ENCODE measurements at regions of chr11 and their contacts with region 1.

Region 1: DNA sequence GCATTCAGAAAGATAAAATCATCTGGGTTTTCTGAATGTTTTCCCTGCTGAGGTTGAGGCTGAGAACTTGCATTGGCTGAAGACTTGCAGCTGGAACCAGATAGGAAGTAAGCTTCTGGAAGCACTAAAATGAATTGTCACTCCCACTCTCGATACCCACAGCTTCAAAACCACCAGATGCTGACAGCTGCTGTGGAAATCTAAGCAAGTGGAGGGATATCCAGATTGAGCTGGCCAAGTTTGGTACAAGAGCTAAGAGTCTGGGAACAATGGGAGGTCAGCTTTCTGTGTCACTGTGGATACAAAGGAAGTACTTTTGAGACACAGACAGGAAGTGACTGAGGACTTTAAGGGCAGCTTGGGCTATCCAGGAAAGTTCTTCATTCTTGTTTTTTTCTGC is 51.3 kb upstream of the CD44 start:
- DNase-seq: peak; percentile 87
- H3K4me3 ChIP-seq: no peak overlapping the region
- H3K27ac ChIP-seq: peak overlapping the region in 3 of 4 donors; percentile 2 to 55 (median 27)
- H3K4me1 ChIP-seq: peaks cover 37 to 67% (median 55%) of the 10 kb centered on the region in 4 donors
- H3K27me3 ChIP-seq: no peaks in the 10 kb centered on the region
- CTCF ChIP-seq: no peak
- EP300 ChIP-seq: no peak
- POLR2A ChIP-seq: no peak

Region 2: DNA sequence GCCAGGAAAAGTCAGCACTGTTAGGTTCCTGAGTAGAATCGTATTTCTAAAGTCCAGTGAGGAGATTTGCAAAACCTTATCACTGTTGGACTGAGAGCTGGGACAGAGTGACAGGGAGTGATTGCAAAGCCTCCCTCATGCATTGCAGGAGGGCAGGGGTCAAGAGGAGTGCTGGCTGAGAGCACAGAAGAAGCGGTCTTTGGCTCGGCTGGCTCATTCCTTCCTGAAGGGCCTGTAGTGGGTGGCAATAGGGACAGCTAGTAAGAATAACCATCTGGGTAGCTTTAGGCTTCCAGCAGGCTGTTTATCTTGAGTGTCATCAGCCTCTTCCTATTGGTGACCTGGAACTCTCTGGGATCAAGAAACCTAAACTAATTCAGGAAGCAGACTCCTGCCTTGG is 104.7 kb after region 1 on chr11:
- intact Hi-C with region 1: loop called (anchors 5 kb)
- DNase-seq: peak; percentile 91
- H3K4me3 ChIP-seq: no peak overlapping the region
- H3K27ac ChIP-seq: peak overlapping the region; percentile 71 to 80 (median 79)
- H3K4me1 ChIP-seq: peaks cover 19 to 80% (median 71%) of the 10 kb centered on the region in 4 donors
- H3K27me3 ChIP-seq: no peaks in the 10 kb centered on the region
- CTCF ChIP-seq: no peak
- EP300 ChIP-seq: no peak
- POLR2A ChIP-seq: no peak

Region 3: GRCh38 chr11:35250621-35251020 is 163.0 kb after region 1 on chr11:
- intact Hi-C with region 1: loop called (anchors 5 kb)
- DNase-seq: no peak
- H3K4me3 ChIP-seq: no peak overlapping the region
- H3K27ac ChIP-seq: peak overlapping the region in 3 of 4 donors; percentile 13 to 40 (median 24)
- H3K4me1 ChIP-seq: peaks cover 13 to 59% (median 55%) of the 10 kb centered on the region in 4 donors
- H3K27me3 ChIP-seq: no peaks in the 10 kb centered on the region
- CTCF ChIP-seq: no peak
- EP300 ChIP-seq: no peak
- POLR2A ChIP-seq: no peak

Measured in esophagus muscularis mucosa (tissue), 4 donors.